ENCODE measurements at regions of chr1 and their contacts with region 1.

Region 1: GRCh38 chr1:43227143-43227764 is 42.5 kb upstream of the TMEM125 start:
- DNase-seq: peak; percentile 68
- H3K27ac ChIP-seq: no peak overlapping the region
- CTCF ChIP-seq: peak; percentile 91

Region 2: GRCh38 chr1:43383449-43383848 is 156.2 kb after region 1 on chr1:
- CTCF ChIA-PET with region 1: interaction called, 11 read pairs
- POLR2A ChIA-PET with region 1: no interaction called
- DNase-seq: no peak
- H3K27ac ChIP-seq: no peak overlapping the region
- CTCF ChIP-seq: no peak; the same call in 1 of the 2 replicates

Region 3: DNA sequence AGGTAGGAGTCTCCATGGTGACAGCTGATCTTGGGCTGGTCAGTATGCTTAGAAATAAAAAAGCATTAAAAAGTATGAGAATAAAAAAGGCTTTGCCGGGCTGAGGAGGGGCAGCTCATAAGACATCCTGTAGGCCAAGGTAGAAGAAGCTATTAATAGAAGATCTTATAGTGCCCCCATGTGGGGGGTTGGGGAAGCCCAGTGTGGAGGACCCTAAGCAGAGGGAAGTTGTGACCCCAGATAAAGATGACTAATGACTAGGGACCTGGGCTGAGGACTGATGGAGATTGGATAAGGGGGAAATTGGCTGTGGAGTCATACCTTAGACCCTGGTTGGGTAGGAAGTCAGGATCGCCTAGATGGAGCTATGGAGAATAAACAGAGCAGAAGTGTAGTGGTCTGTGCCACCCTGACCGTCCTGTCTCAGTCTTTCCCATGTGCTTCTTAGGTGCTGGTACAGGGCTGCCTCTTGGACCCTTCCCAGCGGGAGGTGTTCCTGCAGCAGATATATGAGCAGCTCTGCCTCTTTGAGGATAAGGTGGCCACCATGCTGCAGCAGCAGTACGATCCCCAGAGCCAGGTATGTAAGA is 187.5 kb after region 1 on chr1:
- CTCF ChIA-PET with region 1: interaction called, 18 read pairs
- POLR2A ChIA-PET with region 1: no interaction called
- DNase-seq: peak; percentile 38
- H3K27ac ChIP-seq: no peak overlapping the region
- CTCF ChIP-seq: peak; percentile 54

Measured in RWPE1 (cell line).